OCI-LY7 (cell line): ENCODE measurements at regions of chr7 and their contacts with region 1.

Region 1: DNA sequence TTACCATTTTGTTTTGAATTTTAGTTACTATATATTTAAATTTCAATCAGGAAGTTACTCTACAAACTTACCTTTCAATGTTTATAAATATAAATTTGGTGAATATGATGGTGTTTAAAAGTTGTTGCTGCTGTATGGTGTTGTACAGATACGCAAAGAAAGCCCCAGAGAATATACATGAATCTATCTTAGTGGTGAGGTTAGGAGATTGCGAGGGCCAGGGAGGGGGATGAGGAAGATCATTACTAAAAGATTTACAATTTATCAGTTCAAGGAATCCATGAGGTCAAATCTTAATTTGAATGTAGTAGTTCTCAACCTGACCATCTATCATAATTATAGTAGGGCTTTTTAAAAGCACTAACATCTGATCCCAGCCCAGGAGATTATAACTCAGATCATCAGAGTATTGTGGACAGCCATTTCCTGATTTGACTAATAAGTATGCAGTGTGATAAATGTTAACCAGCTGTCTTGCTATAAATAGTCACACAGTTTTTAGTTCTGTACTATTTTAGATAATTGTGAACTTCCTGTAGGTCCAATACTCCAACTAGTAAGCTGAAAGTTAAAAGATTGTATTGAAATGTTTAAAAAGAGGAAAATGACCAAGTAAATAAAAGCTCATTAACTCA is 23.6 kb downstream of the FAM3C start:
- DNase-seq: peak; percentile 59
- H3K4me3 ChIP-seq: peak overlapping the region; percentile 31
- H3K27ac ChIP-seq: peak overlapping the region; percentile 52
- H3K4me1 ChIP-seq: peaks cover 35% of the 10 kb centered on the region
- CTCF ChIP-seq: no peak

Region 2: DNA sequence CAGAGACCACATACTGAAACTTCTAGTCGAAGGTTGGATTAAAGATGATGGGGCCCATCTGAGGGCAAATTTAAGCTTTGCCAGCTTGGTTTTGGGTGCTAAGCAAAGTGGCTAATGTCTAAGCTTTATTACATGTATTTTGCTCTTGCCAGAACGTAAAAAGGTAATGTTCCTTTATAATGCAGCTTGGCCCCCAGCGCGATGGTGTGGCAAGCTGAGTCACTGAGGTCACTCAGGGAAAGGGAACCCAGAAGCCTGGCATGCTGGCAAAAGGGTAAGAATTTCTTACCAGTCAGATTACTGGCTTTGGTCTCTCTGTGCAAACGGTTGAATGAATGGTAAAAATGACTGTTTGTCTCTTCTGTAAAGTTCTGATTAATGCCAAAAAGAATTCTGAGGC is 1257.9 kb before region 1 on chr7:
- CTCF ChIA-PET with region 1: no interaction called
- POLR2A ChIA-PET with region 1: no interaction called
- intact Hi-C with region 1: no loop called
- DNase-seq: no peak
- H3K4me3 ChIP-seq: no peak overlapping the region
- H3K27ac ChIP-seq: no peak overlapping the region
- H3K4me1 ChIP-seq: no peaks in the 10 kb centered on the region
- CTCF ChIP-seq: no peak

Region 3: DNA sequence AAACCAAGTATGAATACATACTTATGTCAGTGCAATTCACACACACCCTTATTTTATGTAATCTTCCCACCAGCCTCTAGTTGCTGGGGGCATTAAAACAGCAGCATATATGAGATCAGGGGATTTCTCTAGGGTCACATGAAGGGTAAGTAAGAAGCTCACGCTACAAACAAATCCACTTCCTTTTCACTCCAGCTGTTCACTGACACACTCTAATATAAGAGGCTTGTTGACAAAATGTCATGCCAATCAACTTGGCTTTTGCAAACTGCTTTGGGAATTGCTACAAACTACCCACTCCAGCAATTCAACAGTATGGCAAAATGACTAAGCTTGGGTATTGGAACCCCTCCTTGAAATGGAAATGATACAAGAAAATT is 13.3 kb after region 1 on chr7:
- CTCF ChIA-PET with region 1: interaction called, 3 read pairs
- POLR2A ChIA-PET with region 1: interaction called, 21 read pairs
- intact Hi-C with region 1: no loop called
- DNase-seq: peak; percentile 38
- H3K4me3 ChIP-seq: no peak overlapping the region
- H3K27ac ChIP-seq: no peak overlapping the region
- H3K4me1 ChIP-seq: peaks cover 50% of the 10 kb centered on the region
- CTCF ChIP-seq: no peak